ENCODE measurements at regions of chr15 and their contacts with region 1.

Region 1: DNA sequence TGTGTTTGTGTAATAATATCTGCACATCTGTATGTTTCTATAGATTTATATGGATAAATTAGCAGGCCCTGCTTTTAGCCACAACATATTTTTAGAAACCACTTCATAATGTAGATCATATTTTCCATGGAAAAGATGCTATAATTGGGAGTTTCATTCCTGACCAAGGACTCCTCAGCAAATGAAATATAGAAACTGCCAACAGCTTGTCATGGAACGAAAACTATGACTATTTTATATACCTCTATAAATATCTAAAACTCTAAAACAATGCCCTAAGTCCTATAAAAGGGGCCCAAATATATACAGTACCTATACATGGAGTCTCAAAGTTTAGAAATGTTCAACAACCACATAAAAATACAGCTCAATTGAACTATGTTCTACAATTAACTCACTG is 27.9 kb downstream of the EID1 start:
- DNase-seq: no peak
- H3K4me3 ChIP-seq: no peak overlapping the region
- CTCF ChIP-seq: no peak
- POLR2A ChIP-seq: no peak

Region 2: DNA sequence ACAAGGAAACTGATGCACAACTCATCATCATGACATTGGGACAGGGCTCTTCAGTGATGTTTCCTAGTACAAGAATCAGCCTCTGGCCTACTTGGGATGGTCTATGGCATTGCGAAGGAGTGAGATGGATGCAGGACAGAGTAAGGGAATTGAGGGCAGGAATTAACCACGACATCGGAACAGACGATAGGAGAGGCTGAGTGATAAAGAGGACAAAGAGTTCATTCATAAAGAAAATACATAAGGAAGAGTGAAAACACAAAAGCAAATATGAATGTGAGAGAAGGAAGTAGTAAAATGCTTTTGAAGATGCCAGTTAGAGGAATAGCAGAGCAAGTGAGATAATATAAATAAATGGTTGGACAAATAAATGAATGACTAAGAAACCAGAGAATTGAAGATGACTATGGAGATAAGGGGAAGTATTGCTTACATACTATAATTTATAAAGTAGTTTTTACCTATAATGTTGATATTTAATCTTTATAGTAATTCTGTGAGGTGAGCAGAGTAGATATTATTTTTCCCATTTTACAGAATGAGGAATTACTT is 918.2 kb after region 1 on chr15:
- intact Hi-C with region 1: loop called (anchors 5 kb)
- DNase-seq: no peak
- H3K4me3 ChIP-seq: no peak overlapping the region
- CTCF ChIP-seq: no peak
- POLR2A ChIP-seq: no peak